ENCODE measurements at regions of chr22 and their contacts with region 1.

Region 1: GRCh38 chr22:40024201-40025061 is 29.7 kb downstream of the FAM83F start:
- DNase-seq: peak; percentile 84
- ATAC-seq: peak; percentile 73
- H3K4me3 Mint-ChIP-seq: no peak overlapping the region
- H3K27ac Mint-ChIP-seq: no peak overlapping the region; the same call in 1 of the 2 replicates
- H3K4me1 Mint-ChIP-seq: peaks cover 11% of the 10 kb centered on the region
- H3K27me3 Mint-ChIP-seq: no peaks in the 10 kb centered on the region
- CTCF ChIP-seq: peak; percentile 67

Region 2: DNA sequence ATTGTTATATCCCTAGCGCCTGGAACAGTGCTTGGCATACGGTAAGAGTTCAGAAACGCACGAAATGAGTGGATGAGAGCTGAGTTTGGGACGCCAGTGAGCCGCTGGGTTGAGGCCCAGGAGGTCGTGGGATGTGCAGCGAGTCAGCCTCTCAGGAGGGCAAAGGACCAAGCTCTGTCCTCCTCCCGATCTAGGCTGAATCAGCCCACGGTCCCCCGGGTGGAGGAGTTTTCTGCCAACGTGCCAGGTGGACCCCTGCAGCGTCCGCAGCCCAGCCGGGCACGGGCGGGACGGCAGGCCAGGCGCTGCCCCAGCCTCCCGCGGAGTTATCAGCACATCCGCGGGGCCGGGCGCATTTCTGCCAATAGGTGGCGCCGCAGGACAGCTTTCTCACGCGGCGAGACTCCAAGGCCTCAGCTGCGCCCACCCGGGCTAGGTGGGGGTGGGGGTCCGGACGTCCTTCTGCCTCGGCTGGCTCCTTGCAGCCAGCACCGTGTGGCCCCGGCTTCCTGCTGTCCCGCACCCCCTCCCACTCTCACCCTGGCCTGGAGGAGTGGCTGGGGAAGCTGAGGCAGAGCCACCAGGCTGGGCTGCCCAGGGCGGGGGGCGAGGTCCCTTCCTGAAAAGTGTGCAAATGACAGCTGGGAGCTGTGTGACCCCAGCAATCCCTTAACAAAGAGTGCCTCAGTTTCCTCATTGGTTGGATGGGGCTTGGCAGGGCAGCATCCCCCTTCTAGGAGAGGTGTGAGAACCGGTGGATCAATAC is 489.7 kb before region 1 on chr22:
- CTCF ChIA-PET with region 1: interaction called, 35 read pairs
- POLR2A ChIA-PET with region 1: no interaction called
- DNase-seq: peak; percentile 96
- ATAC-seq: peak; percentile 12
- H3K4me3 Mint-ChIP-seq: peak overlapping the region; percentile 56
- H3K27ac Mint-ChIP-seq: peak overlapping the region; percentile 75
- H3K4me1 Mint-ChIP-seq: peaks cover 55% of the 10 kb centered on the region
- H3K27me3 Mint-ChIP-seq: no peaks in the 10 kb centered on the region
- CTCF ChIP-seq: peak; percentile 94

Region 3: GRCh38 chr22:39920134-39920743 is 104.2 kb before region 1 on chr22:
- CTCF ChIA-PET with region 1: interaction called, 47 read pairs
- POLR2A ChIA-PET with region 1: no interaction called
- DNase-seq: no peak
- ATAC-seq: no peak
- H3K4me3 Mint-ChIP-seq: no peak overlapping the region
- H3K27ac Mint-ChIP-seq: no peak overlapping the region
- H3K4me1 Mint-ChIP-seq: peaks cover 12% of the 10 kb centered on the region
- H3K27me3 Mint-ChIP-seq: no peaks in the 10 kb centered on the region
- CTCF ChIP-seq: no peak

Region 4: GRCh38 chr22:39938509-39939111 is 85.8 kb before region 1 on chr22:
- CTCF ChIA-PET with region 1: interaction called, 146 read pairs
- POLR2A ChIA-PET with region 1: interaction called, 6 read pairs
- DNase-seq: no peak
- ATAC-seq: no peak
- H3K4me3 Mint-ChIP-seq: no peak overlapping the region
- H3K27ac Mint-ChIP-seq: no peak overlapping the region; the same call in 1 of the 2 replicates
- H3K4me1 Mint-ChIP-seq: peaks cover 84% of the 10 kb centered on the region
- H3K27me3 Mint-ChIP-seq: no peaks in the 10 kb centered on the region; the same call in 1 of the 2 replicates
- CTCF ChIP-seq: no peak

Region 5: GRCh38 chr22:39959640-39960447 is 64.6 kb before region 1 on chr22 and contains the start of gene TMA7B:
- CTCF ChIA-PET with region 1: interaction called, 12 read pairs
- POLR2A ChIA-PET with region 1: no interaction called
- DNase-seq: peak; percentile 31
- ATAC-seq: peak; percentile 96
- H3K4me3 Mint-ChIP-seq: no peak within 1 kb of the TSS
- H3K27ac Mint-ChIP-seq: peak within 1 kb of the TSS; percentile 37; the same call in 1 of the 2 replicates
- H3K4me1 Mint-ChIP-seq: peaks cover 38% of the 10 kb centered on the region
- H3K27me3 Mint-ChIP-seq: peaks cover 11% of the 10 kb centered on the region
- CTCF ChIP-seq: no peak
- total RNA-seq, gene TMA7B: not detected in 3 replicates

Region 6: DNA sequence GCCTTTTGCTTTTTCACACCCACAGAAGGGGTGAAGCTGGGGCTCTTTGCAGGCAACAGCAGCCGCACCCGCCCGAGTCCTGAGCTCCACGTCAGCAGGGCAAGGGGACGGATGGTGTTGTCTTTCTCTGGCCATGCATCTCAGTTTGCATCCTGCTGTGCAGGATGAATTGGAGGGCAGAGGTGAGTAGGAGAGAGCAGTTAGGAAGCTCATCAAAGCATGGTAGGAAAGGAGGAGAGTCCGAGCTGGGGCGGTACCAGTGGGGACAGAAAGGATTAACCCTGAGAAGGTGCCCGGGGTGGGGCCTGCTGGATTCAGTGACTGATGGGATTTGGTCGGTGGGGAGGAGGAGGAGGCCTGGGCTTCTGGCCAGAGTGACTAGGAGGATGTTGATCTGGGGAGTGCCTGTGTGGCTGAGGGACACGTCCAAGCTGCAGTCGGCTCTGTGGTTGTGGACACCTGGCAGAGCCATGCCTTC is 15.1 kb before region 1 on chr22:
- CTCF ChIA-PET with region 1: interaction called, 56 read pairs
- POLR2A ChIA-PET with region 1: interaction called, 3 read pairs
- DNase-seq: peak; percentile 63
- ATAC-seq: peak; percentile 79
- H3K4me3 Mint-ChIP-seq: peak overlapping the region; percentile 29
- H3K27ac Mint-ChIP-seq: peak overlapping the region; percentile 70; the same call in 1 of the 2 replicates
- H3K4me1 Mint-ChIP-seq: peaks cover 57% of the 10 kb centered on the region
- H3K27me3 Mint-ChIP-seq: no peaks in the 10 kb centered on the region
- CTCF ChIP-seq: no peak